Activated CD4-positive, alpha-beta T cell treated with anti-CD3 and anti-CD28 coated beads for 36 hours (primary cell): ENCODE measurements at regions of chr16 and their contacts with region 1.

Region 1: GRCh38 chr16:71564155-71564967 is 12.5 kb downstream of the TAT start:
- DNase-seq: no peak
- ATAC-seq: no peak
- H3K4me3 Mint-ChIP-seq: peak overlapping the region; percentile 87
- H3K27ac Mint-ChIP-seq: peak overlapping the region; percentile 98
- H3K4me1 Mint-ChIP-seq: peaks cover 15% of the 10 kb centered on the region
- H3K27me3 Mint-ChIP-seq: no peaks in the 10 kb centered on the region

Region 2: GRCh38 chr16:71461686-71462648 is 102.4 kb before region 1 on chr16 and contains the start of gene ZNF23:
- CTCF ChIA-PET with region 1: no interaction called
- POLR2A ChIA-PET with region 1: interaction called, 3 read pairs
- intact Hi-C with region 1: loop called in 1 of 2 experiments (anchors 1 kb)
- DNase-seq: peak; percentile 88
- ATAC-seq: peak; percentile 96
- H3K4me3 Mint-ChIP-seq: peak within 1 kb of the TSS; percentile 76
- H3K27ac Mint-ChIP-seq: peak within 1 kb of the TSS; percentile 96
- H3K4me1 Mint-ChIP-seq: peaks cover 19% of the 10 kb centered on the region
- H3K27me3 Mint-ChIP-seq: no peaks in the 10 kb centered on the region
- total RNA-seq, gene ZNF23: 9.6 to 10.9 TPM

Region 3: DNA sequence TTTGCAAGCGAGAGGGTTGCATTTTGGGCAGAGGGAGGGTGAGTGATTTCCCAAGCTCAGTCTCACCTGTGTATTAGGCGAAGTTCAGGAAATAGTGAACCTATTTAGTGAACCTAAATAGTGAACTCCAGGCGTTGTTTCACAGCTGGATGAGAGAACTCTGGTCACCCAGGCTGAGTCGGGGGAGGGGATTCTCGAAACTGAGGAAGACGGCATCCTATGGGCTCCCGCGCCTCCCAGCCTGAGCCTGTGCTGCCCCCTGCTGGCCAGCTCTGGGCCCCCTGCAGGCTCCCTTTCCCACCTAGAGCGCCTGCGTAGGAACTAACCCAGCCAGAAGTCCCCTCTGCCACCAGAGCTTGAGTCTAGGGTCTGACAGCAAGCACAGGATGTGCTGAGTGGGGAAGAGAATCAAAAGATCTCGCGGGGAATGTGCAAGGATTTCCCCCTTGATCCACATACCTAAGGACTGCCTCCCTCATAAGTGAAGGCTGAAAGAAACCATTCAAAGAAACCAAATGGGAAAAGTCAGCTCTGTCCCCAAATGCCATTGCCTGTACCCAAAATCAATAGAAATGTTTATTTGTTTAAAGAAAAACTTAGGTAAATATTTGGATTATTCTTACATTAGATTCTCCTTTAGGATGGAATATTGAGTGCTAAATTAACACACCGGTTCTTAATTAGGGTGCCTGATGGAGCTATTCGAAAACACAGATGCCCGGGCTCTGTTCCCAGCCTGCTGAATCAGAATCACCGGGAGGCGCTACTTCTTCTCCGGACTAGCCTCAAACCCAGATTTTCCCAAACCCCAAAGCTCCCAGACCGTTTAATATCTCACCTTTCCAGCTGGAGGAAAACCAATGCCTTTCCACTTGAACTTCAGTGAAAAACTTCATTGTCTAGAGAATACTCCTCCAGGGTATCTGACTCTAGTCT is 46.8 kb after region 1 on chr16:
- CTCF ChIA-PET with region 1: interaction called, 57 read pairs
- POLR2A ChIA-PET with region 1: interaction called, 9 read pairs
- intact Hi-C with region 1: loop called (anchors 1 kb)
- DNase-seq: peak; percentile 90
- ATAC-seq: peak; percentile 84
- H3K4me3 Mint-ChIP-seq: no peak overlapping the region
- H3K27ac Mint-ChIP-seq: no peak overlapping the region
- H3K4me1 Mint-ChIP-seq: peaks cover 14% of the 10 kb centered on the region
- H3K27me3 Mint-ChIP-seq: peaks cover 13% of the 10 kb centered on the region

Region 4: GRCh38 chr16:71746442-71747046 is 182.2 kb after region 1 on chr16:
- CTCF ChIA-PET with region 1: interaction called, 3 read pairs
- POLR2A ChIA-PET with region 1: no interaction called
- intact Hi-C with region 1: loop called (anchors 1 to 10 kb)
- DNase-seq: peak; percentile 35
- ATAC-seq: peak; percentile 71
- H3K4me3 Mint-ChIP-seq: no peak overlapping the region
- H3K27ac Mint-ChIP-seq: peak overlapping the region; percentile 8
- H3K4me1 Mint-ChIP-seq: peaks cover 6% of the 10 kb centered on the region
- H3K27me3 Mint-ChIP-seq: no peaks in the 10 kb centered on the region

Region 5: DNA sequence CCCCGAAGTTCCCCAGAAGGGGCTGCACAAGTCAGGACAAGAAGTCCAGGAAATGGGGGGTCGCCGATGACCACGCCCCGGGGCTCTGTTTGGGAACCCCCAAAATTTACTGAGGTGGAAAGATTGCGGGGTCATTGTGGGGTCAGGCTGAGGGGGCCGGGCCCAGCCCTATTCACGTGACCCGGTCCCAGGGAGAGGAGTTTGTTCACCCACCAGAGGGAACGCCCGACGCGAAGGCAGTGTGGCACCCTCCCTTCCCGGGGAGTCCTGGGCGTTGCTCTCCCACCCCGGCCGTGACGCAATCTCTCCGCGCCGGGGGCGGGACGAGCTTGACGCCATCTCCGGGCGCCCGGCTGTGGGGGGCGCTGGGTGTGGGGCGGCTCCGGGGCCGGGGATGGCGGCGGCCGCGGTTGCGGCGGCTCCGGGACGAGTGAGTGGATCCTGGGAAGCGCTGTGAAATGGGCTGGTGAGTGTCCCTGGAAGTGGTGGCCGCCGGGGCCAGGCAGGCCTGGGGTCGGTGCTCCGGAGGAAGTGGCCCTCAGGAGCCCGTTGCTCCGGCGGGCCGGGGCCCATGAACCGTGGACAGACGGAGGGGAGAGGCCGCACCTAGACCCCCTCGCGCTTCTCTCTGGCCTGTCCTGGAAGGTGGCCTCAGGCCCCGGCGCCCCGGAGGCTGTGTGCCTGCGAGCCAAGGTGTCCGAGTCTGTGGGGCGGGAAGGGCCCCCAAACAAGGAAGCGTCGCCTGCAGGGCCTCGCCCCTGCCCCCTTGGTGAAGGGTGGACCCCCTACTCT is 281.5 kb after region 1 on chr16 and contains the start of gene ATXN1L:
- CTCF ChIA-PET with region 1: no interaction called
- POLR2A ChIA-PET with region 1: no interaction called
- intact Hi-C with region 1: loop called in 1 of 2 experiments (anchors 1 kb)
- DNase-seq: peak; percentile 95
- ATAC-seq: peak; percentile 82
- H3K4me3 Mint-ChIP-seq: peak within 1 kb of the TSS; percentile 87
- H3K27ac Mint-ChIP-seq: peak within 1 kb of the TSS; percentile 93
- H3K4me1 Mint-ChIP-seq: peaks cover 43% of the 10 kb centered on the region
- H3K27me3 Mint-ChIP-seq: no peaks in the 10 kb centered on the region
- total RNA-seq, gene ATXN1L: 15.4 to 16.9 TPM

Region 6: DNA sequence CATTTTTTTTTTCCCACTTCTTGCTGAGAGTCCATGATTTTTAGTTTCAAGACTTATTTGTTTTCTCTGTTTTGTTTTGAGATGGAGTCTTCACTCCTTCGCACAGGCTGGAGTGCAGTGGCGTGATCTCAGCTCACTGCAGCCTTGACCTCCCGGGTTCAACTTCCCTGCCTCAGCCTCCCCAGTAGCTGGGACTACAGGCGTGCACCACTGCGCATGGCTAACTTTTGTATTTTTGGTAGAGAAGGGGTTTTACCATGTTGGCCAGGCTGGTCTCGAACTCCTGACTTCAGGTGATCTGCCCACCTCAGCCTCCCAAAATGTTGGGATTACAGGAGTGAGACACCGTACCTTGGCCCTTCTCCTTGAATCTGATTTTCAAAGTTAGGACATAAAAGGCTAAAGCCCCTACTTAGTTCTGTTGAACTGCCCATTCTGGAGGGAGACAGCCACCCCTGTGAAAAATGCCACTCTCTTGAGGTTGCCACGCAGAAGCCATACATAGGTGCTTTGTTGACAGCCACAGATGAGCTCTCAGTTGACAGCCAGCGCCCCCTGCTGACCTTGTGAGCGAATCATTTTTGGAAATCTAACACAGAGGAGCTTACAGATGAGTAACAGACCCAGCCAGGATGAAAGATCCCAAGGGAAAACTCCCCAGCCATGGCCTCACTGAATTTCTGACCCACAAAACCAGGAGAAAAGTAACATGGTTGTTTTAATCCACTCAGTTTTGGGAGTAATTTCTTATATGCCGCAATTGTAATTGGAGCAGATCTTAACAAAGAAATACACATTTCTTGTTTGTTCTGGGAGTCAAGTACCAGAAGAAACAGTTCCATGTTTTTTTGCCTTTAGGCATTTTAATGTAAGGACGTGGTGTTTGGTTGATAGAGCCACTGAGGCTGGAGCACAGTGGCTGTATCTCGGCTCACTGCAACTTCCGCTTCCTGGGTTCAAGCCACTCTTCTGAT is 397.0 kb after region 1 on chr16:
- CTCF ChIA-PET with region 1: interaction called, 4 read pairs
- POLR2A ChIA-PET with region 1: no interaction called
- intact Hi-C with region 1: loop called (anchors 2 to 5 kb)
- DNase-seq: peak; percentile 92
- ATAC-seq: peak; percentile 97
- H3K4me3 Mint-ChIP-seq: no peak overlapping the region
- H3K27ac Mint-ChIP-seq: no peak overlapping the region
- H3K4me1 Mint-ChIP-seq: peaks cover 5% of the 10 kb centered on the region
- H3K27me3 Mint-ChIP-seq: no peaks in the 10 kb centered on the region

Region 7: GRCh38 chr16:72664509-72665225 is 1100.3 kb after region 1 on chr16:
- CTCF ChIA-PET with region 1: no interaction called
- POLR2A ChIA-PET with region 1: no interaction called
- intact Hi-C with region 1: loop called in 1 of 2 experiments (anchors 10 kb)
- DNase-seq: peak; percentile 97
- ATAC-seq: peak; percentile 100
- H3K4me3 Mint-ChIP-seq: peak overlapping the region; percentile 99
- H3K27ac Mint-ChIP-seq: peak overlapping the region; percentile 96
- H3K4me1 Mint-ChIP-seq: peaks cover 13% of the 10 kb centered on the region
- H3K27me3 Mint-ChIP-seq: peaks cover 4% of the 10 kb centered on the region